HEK293 (cell line): ENCODE measurements at regions of chrX and their contacts with region 1.

Region 1: DNA sequence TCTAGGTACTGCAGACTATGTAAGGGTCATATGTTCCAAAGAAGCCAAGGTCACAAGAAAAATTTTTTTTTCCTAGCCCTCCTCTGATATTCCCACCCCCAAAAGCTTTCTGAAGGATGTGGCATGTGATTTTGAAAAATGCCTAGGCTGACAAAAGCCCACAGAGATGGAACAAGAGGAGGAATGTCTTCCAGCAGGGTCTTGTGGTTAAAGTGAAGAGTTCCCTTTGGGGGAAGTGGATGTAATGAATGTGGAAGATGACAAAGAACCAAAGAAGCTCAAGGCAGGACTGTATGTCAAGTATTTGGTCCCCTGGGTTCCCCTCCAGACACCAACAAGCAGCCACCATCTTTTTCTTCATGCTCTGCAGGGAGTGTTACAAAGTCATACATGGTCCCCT is 268.8 kb downstream of the BCOR start:
- H3K4me3 ChIP-seq: no peak overlapping the region
- H3K27ac ChIP-seq: no peak overlapping the region
- H3K4me1 ChIP-seq: no peaks in the 10 kb centered on the region
- CTCF ChIP-seq: no peak

Region 2: DNA sequence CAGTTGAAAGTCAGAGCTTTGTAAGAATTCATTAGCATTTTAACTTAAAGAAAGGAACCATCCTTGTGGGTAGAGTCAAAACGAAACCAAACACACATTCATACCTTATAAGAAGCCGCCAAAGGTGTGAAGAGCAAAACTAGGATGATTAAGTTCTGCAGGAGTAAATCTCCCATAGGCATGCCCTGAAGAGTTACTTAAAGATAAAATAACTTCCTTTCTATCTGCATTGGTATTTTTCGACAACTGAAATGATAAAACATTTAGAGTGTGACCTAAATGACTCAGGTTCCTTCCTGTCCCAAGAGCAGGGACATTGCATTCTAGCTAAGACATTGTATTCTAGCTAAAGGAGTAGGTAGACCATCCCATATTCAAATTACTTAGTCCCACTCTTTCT is 193.4 kb after region 1 on chrX:
- CTCF ChIA-PET with region 1: no interaction called
- POLR2A ChIA-PET with region 1: interaction called, 11 read pairs
- H3K4me3 ChIP-seq: no peak overlapping the region
- H3K27ac ChIP-seq: no peak overlapping the region
- H3K4me1 ChIP-seq: no peaks in the 10 kb centered on the region
- CTCF ChIP-seq: no peak

Region 3: GRCh38 chrX:40207626-40208025 is 378.7 kb after region 1 on chrX:
- CTCF ChIA-PET with region 1: no interaction called
- POLR2A ChIA-PET with region 1: no interaction called
- H3K4me3 ChIP-seq: no peak overlapping the region
- H3K27ac ChIP-seq: no peak overlapping the region
- H3K4me1 ChIP-seq: no peaks in the 10 kb centered on the region
- CTCF ChIP-seq: no peak